PC-9 (cell line): ENCODE measurements at regions of chr16 and their contacts with region 1.

Region 1: DNA sequence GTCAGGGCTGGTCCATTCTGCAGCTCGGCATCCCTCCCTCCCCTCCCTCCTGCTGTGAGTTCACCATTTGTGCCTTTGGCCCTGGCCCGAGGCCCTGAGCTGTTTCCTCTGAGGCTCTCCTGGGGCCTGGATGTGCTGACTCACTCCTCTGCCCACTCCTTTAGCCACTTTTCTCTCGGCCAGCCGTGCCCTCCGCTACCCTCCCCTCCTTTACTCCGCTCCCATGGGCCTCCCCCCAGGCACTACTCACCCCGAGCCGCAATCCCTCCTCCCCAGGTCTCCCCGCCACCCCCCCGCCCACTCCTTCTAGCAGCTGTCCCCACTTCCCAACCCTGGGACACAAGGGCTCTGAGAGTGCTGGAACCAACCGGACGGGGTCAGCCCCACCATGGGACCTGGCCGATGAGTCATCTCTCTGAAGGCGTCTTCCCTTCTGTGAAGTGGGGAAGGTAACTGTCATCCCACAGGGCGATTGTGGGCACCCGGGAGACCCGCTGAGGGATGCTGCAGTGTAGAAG is 11.4 kb downstream of the KCNG4 start:
- DNase-seq: peak; percentile 84 to 86
- H3K4me3 ChIP-seq: peak overlapping the region; percentile 30
- H3K27ac ChIP-seq: peak overlapping the region; percentile 90
- H3K4me1 ChIP-seq: peaks cover 32% of the 10 kb centered on the region
- H3K27me3 ChIP-seq: no peaks in the 10 kb centered on the region
- CTCF ChIP-seq: no peak

Region 2: GRCh38 chr16:84072014-84072413 is 156.4 kb before region 1 on chr16:
- CTCF ChIA-PET with region 1: no interaction called
- POLR2A ChIA-PET with region 1: no interaction called
- intact Hi-C with region 1: no loop called
- DNase-seq: no peak
- H3K4me3 ChIP-seq: no peak overlapping the region
- H3K27ac ChIP-seq: no peak overlapping the region
- H3K4me1 ChIP-seq: no peaks in the 10 kb centered on the region
- H3K27me3 ChIP-seq: no peaks in the 10 kb centered on the region
- CTCF ChIP-seq: no peak

Region 3: DNA sequence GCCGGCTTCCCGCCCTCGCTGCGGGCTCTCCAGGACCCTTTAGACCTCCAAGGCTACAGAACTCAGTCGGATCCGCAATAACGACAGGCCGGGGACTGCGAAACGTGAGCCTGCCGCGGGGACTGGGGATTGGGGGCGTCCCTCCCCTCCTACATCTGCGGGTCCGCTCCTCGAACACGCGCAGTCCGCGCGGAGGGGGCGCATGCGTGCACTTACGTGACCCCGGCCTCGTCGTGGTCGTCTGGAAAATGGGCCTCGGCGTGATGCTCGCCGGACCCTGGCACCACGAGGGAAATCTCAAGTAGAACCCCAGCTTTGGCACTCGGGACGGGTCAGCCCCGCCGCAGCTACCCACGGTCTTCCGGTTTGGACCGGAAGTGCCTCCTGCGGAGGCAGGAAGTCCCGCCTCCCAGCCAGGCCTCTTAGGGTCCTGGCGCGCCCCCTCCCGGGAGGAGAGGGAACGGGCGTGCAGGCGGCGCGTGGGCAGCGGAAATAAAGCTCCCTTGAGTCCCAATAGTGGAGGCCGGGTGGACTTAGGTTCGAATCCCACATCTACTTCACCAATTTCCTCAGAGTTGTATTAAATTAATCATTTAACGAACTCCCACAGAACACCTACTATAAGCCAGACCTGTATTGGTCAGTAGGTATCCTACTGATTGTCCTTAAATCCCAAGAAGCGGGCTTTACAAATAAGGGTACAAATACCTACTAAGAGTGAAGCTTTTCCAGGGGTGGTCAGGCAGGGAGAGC is 41.5 kb before region 1 on chr16 and contains the start of gene TAF1C:
- CTCF ChIA-PET with region 1: interaction called, 12 read pairs
- POLR2A ChIA-PET with region 1: no interaction called
- intact Hi-C with region 1: no loop called
- DNase-seq: peak; percentile 86 to 88
- H3K4me3 ChIP-seq: peak within 1 kb of the TSS; percentile 99
- H3K27ac ChIP-seq: no peak within 1 kb of the TSS
- H3K4me1 ChIP-seq: peaks cover 10% of the 10 kb centered on the region; the same call in 1 of the 2 replicates
- H3K27me3 ChIP-seq: no peaks in the 10 kb centered on the region
- CTCF ChIP-seq: peak; percentile 93
- total RNA-seq, gene TAF1C: 40.2 and 43.0 TPM in 2 replicates

Region 4: DNA sequence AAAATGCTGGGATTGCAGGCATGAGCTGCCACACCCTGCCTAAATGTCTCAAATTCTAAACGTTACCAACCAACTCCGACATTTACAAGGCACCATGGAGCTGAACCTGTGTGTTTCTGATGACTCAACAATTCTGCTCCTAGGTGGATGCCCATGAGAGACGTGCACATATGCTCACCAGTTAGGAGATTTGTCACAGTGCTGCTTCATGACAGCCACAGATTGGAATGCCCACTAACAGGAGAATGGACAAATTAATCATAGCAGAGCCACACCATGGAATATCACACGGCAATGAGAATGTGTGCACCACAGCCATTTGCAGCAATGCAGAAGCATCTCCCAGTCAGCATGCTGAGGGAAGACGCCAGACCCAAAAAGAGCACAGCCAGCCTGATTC is 19.5 kb after region 1 on chr16:
- CTCF ChIA-PET with region 1: no interaction called
- POLR2A ChIA-PET with region 1: no interaction called
- intact Hi-C with region 1: no loop called
- DNase-seq: peak; percentile 47 to 97
- H3K4me3 ChIP-seq: peak overlapping the region; percentile 9; the same call in 1 of the 2 replicates
- H3K27ac ChIP-seq: peak overlapping the region; percentile 90
- H3K4me1 ChIP-seq: peaks cover 42% of the 10 kb centered on the region
- H3K27me3 ChIP-seq: no peaks in the 10 kb centered on the region
- CTCF ChIP-seq: no peak

Region 5: DNA sequence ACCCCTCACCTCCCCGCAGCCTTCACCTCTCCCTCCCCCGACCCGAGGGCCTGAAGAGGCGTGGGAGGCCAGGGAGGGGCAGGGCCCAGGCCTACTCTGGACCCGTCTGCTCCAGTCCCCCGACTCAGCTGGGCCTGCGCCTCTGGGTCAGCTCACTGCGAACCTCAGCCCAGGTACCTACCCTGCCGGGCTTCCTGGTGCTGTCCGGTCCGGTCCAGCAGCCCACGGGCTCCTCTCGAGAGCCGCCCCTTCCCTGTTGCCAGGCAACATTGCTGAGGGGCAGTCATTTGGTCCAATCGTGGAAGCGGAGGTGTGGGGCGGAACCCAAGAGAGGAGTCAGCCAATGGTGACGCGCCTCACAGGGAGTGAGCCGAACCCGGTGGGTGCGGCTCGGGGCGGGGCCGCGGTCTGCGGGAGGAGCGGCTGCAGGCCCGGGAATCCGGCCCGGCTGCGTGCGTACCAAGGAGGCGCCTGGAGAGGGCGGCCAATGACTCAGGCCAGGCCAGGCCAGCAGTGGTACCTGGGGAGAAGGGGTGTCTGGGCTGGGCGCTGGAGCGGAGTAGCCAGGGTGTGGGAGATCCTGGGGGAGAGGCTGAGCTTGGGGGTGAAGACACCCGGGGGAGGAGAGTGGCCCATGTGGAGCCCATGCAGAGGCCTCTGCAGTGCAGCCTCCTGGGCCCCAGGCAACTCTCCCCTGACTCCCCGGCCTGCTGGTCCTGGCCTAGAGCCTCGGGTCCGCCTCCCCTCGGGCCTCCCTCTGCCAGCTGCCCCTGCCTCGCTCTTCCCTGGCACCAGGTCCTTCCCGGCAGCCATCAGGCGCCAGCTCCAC is 276.3 kb after region 1 on chr16 and contains the start of gene MEAK7:
- CTCF ChIA-PET with region 1: no interaction called
- POLR2A ChIA-PET with region 1: no interaction called
- intact Hi-C with region 1: loop called (anchors 5 kb)
- DNase-seq: peak; percentile 95 to 99
- H3K4me3 ChIP-seq: peak within 1 kb of the TSS; percentile 92
- H3K27ac ChIP-seq: peak within 1 kb of the TSS; percentile 99
- H3K4me1 ChIP-seq: peaks cover 59% of the 10 kb centered on the region
- H3K27me3 ChIP-seq: no peaks in the 10 kb centered on the region
- CTCF ChIP-seq: no peak
- total RNA-seq, gene MEAK7: 73.4 and 74.6 TPM in 2 replicates